CD4-positive, alpha-beta T cell (primary cell): ENCODE measurements at regions of chr5 and their contacts with region 1.

Region 1: GRCh38 chr5:132866342-132867045 is at the starts of genes GDF9 and UQCRQ:
- DNase-seq: peak; percentile 75 to 99 (median 84)
- ATAC-seq: peak; percentile 93
- H3K4me3 ChIP-seq: peak within 1 kb of the TSS; percentile 95
- H3K4me3 Mint-ChIP-seq: peak within 1 kb of the TSS; percentile 96
- H3K27ac ChIP-seq: peak within 1 kb of the TSS; percentile 95 to 98
- H3K27ac Mint-ChIP-seq: peak within 1 kb of the TSS; percentile 97
- H3K4me1 ChIP-seq: peaks cover 24% of the 10 kb centered on the region
- H3K4me1 Mint-ChIP-seq: peaks cover 31% of the 10 kb centered on the region
- H3K27me3 ChIP-seq: no peaks in the 10 kb centered on the region
- H3K27me3 Mint-ChIP-seq: no peaks in the 10 kb centered on the region
- CTCF ChIP-seq: no peak
- total RNA-seq, gene GDF9: 0.91 to 1.6 TPM
- total RNA-seq, gene UQCRQ: 119 to 132 TPM

Region 2: DNA sequence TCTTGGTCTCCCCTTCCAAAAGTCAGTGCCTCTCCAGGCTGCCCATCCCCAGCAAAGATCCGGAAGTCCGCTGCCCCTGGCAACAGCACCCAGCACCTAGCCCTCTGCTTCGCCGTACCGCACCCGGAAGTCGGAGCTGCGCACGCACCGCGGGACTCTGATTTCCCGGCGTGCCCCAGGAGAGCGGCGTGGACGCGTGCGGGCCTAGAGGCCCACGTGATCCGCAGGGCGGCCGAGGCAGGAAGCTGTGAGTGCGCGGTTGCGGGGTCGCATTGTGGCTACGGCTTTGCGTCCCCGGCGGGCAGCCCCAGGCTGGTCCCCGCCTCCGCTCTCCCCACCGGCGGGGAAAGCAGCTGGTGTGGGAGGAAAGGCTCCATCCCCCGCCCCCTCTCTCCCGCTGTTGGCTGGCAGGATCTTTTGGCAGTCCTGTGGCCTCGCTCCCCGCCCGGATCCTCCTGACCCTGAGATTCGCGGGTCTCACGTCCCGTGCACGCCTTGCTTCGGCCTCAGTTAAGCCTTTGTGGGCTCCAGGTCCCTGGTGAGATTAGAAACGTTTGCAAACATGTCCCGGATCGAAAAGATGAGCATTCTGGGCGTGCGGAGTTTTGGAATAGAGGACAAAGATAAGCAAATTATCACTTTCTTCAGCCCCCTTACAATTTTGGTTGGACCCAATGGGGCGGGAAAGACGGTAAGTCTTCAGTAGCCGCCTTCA is 309.6 kb before region 1 on chr5 and contains the start of gene RAD50:
- CTCF ChIA-PET with region 1: no interaction called
- POLR2A ChIA-PET with region 1: interaction called, 6 read pairs
- intact Hi-C with region 1: loop called in 1 of 2 experiments (anchors 5 kb)
- DNase-seq: peak; percentile 79 to 96 (median 88)
- ATAC-seq: peak; percentile 94
- H3K4me3 ChIP-seq: peak within 1 kb of the TSS; percentile 83
- H3K4me3 Mint-ChIP-seq: peak within 1 kb of the TSS; percentile 95
- H3K27ac ChIP-seq: peak within 1 kb of the TSS; percentile 76 to 78
- H3K27ac Mint-ChIP-seq: peak within 1 kb of the TSS; percentile 98
- H3K4me1 ChIP-seq: peaks cover 22% of the 10 kb centered on the region
- H3K4me1 Mint-ChIP-seq: peaks cover 43% of the 10 kb centered on the region
- H3K27me3 ChIP-seq: no peaks in the 10 kb centered on the region
- H3K27me3 Mint-ChIP-seq: no peaks in the 10 kb centered on the region
- CTCF ChIP-seq: no peak
- total RNA-seq, gene RAD50: 12.7 to 13.4 TPM

Region 3: DNA sequence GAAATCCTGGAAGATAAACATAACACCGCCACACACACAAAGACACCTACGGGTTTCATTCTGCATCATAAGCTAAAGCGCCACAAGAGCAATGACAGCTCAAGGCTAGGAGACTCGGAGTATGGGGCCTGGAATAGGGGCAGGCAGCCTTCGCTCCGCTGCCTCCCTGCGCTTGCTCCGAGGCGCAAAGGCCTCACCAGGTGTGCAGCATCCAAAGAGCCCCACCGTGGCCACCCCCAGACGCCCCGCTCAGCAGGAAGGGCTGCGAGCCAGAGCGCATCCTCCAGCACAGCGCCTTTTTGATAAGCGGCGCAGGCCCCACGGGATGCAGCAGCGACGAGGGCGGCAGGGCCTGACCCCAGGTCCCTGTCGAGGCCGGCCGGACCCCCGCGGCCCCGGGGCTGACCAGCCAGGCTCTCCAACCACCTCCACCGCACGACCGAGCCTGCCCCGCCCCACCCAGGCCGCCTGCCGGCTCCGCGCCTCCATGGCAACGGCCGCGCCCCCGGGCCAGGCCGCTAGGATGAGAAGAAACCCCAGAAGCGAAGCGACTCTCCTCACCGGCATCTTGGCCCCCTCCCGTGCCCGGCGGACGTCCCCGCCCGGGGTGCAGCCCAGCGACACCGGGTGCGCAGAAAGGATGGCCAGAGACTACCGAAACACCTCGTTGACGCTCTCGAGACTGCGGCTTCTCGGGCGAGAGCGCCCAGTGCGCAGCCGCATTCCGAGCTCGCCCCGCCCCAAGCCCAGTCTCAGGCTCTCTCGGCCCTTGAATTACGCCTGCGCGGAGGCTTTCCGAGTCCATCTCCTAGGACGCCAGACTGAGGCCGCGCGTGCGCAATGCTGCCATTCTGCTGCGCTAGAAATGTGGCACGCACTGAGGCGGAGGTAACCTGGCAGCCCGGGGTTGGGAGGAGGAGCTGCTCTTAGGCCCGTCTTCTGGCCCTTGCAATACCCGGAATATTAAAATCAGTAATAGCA is 129.4 kb before region 1 on chr5 and contains the start of gene KIF3A:
- CTCF ChIA-PET with region 1: no interaction called
- POLR2A ChIA-PET with region 1: no interaction called
- intact Hi-C with region 1: loop called in 1 of 2 experiments (anchors 5 kb)
- DNase-seq: peak; percentile 96 to 100 (median 98)
- ATAC-seq: peak; percentile 86
- H3K4me3 ChIP-seq: peak within 1 kb of the TSS; percentile 79
- H3K4me3 Mint-ChIP-seq: peak within 1 kb of the TSS; percentile 87
- H3K27ac ChIP-seq: peak within 1 kb of the TSS; percentile 74 to 81
- H3K27ac Mint-ChIP-seq: peak within 1 kb of the TSS; percentile 76
- H3K4me1 ChIP-seq: peaks cover 16% of the 10 kb centered on the region
- H3K4me1 Mint-ChIP-seq: peaks cover 31% of the 10 kb centered on the region
- H3K27me3 ChIP-seq: no peaks in the 10 kb centered on the region
- H3K27me3 Mint-ChIP-seq: no peaks in the 10 kb centered on the region
- CTCF ChIP-seq: peak; percentile 32
- total RNA-seq, gene KIF3A: 10.2 to 12.4 TPM

Region 4: GRCh38 chr5:132883261-132883834 is 16.9 kb after region 1 on chr5:
- CTCF ChIA-PET with region 1: interaction called, 11 read pairs
- POLR2A ChIA-PET with region 1: interaction called, 3 read pairs
- intact Hi-C with region 1: no loop called
- DNase-seq: peak in 5 of 14 experiments; percentile 7 to 73 (median 54)
- ATAC-seq: peak; percentile 83
- H3K4me3 ChIP-seq: no peak overlapping the region
- H3K4me3 Mint-ChIP-seq: no peak overlapping the region
- H3K27ac ChIP-seq: no peak overlapping the region
- H3K27ac Mint-ChIP-seq: peak overlapping the region; percentile 0
- H3K4me1 ChIP-seq: no peaks in the 10 kb centered on the region
- H3K4me1 Mint-ChIP-seq: no peaks in the 10 kb centered on the region
- H3K27me3 ChIP-seq: no peaks in the 10 kb centered on the region
- H3K27me3 Mint-ChIP-seq: no peaks in the 10 kb centered on the region
- CTCF ChIP-seq: peak; percentile 48

Region 5: GRCh38 chr5:132963175-132964104 is 96.9 kb after region 1 on chr5 and contains the start of gene AFF4:
- CTCF ChIA-PET with region 1: no interaction called
- POLR2A ChIA-PET with region 1: interaction called, 20 read pairs
- intact Hi-C with region 1: loop called in 1 of 2 experiments (anchors 2 kb)
- DNase-seq: peak; percentile 67 to 95 (median 80)
- ATAC-seq: peak; percentile 74
- H3K4me3 ChIP-seq: peak within 1 kb of the TSS; percentile 65
- H3K4me3 Mint-ChIP-seq: peak within 1 kb of the TSS; percentile 99
- H3K27ac ChIP-seq: peak within 1 kb of the TSS; percentile 92 to 96
- H3K27ac Mint-ChIP-seq: peak within 1 kb of the TSS; percentile 97
- H3K4me1 ChIP-seq: peaks cover 26% of the 10 kb centered on the region
- H3K4me1 Mint-ChIP-seq: peaks cover 39% of the 10 kb centered on the region
- H3K27me3 ChIP-seq: no peaks in the 10 kb centered on the region
- H3K27me3 Mint-ChIP-seq: no peaks in the 10 kb centered on the region
- CTCF ChIP-seq: no peak
- total RNA-seq, gene AFF4: 97.9 to 103 TPM

Region 6: DNA sequence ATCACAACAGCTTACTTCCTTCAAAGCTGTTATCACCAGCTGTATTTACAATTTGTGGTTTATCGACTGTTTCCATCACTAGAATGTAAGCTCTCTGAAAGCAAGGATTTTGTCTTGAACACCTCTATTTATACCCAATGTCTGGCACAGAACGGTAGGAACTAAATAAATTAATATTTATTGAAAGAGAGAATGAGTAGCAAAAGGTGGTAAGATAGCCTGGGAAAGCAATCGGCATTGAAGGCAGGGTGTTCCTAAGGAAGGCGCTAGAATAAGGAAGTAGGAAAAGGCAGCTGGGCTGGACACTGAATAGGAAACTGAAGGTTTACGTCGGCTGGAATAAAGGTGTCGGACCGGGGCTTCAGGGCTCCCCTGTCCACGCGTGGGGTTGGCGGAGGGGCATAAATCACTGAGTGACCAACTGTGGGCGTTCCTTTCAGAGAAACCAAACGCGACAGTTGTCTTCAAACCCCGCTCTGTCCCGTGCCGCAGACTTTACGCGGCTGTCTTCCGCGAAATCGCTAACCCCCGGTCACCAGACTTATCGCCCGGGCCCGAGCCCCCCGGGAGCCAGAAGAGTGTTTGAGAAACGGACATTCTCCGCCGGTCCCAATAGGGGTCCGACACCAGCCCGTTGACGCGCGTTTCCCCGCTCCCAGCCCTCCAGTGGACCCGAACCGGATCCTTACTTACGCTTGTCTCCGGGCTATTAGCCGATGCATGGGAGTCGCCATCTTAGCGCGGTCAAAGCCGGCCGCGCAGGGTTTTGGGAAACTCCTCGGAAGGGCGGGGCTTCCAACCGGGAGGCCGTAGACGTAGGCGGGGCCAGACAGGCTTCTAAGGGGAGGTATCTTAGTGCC is 159.5 kb after region 1 on chr5 and contains the start of gene ZCCHC10:
- CTCF ChIA-PET with region 1: no interaction called
- POLR2A ChIA-PET with region 1: no interaction called
- intact Hi-C with region 1: loop called in 1 of 2 experiments (anchors 5 kb)
- DNase-seq: peak; percentile 81 to 95 (median 88)
- ATAC-seq: peak; percentile 99
- H3K4me3 ChIP-seq: peak within 1 kb of the TSS; percentile 90
- H3K4me3 Mint-ChIP-seq: peak within 1 kb of the TSS; percentile 97
- H3K27ac ChIP-seq: peak within 1 kb of the TSS; percentile 83 to 88
- H3K27ac Mint-ChIP-seq: peak within 1 kb of the TSS; percentile 92
- H3K4me1 ChIP-seq: peaks cover 14% of the 10 kb centered on the region
- H3K4me1 Mint-ChIP-seq: peaks cover 21% of the 10 kb centered on the region
- H3K27me3 ChIP-seq: no peaks in the 10 kb centered on the region
- H3K27me3 Mint-ChIP-seq: no peaks in the 10 kb centered on the region
- CTCF ChIP-seq: no peak
- total RNA-seq, gene ZCCHC10: 17.7 to 20.1 TPM

Region 7: DNA sequence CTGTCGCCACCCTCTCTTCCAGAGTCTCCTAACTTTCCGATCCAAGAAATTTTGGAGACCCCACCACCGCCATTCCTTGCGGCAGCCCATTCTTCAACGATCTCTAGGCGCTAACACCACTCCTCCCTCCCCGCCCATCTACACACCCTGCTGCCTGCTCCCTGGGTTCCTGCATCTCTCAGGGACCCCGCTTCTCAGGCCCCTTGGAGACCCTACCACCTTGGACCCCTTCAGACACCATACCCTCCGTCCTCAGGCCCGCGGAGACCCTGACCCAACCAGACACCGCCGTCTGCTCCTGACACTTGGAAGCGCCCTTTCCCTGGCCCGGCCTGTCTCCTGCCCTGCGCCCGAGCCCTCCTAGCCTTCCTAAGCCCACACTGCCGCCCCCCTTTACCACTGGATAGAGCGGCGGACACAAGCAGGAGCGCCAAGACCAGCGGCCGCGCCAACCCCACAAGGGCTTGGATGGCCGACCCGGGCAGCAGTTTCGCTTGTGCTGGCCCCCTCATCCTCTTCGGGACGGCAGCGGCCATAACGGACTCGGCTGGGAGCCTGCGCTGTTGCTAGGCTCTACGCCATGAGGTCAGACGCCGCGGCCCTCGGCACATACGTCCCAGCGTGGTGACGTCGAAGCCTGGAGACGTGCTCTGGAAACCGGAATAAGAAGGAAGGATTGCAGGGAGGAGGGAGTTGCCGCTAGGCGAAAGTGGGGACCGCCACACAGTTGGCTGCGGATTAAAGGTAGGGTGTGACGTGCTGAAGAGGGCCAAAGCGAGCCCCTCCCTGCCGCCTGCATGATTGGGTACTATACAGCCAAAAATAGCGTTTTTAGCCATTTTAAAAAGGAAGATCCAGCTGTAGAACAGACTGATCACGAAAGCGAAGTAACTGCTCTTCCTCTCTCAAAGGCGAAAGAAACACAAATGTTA is 1101.8 kb after region 1 on chr5 and contains the start of gene C5orf15:
- CTCF ChIA-PET with region 1: no interaction called
- POLR2A ChIA-PET with region 1: no interaction called
- intact Hi-C with region 1: loop called in 1 of 2 experiments (anchors 10 kb)
- DNase-seq: peak; percentile 74 to 98 (median 89)
- ATAC-seq: peak; percentile 91
- H3K4me3 ChIP-seq: peak within 1 kb of the TSS; percentile 95
- H3K4me3 Mint-ChIP-seq: peak within 1 kb of the TSS; percentile 94
- H3K27ac ChIP-seq: peak within 1 kb of the TSS; percentile 82 to 86
- H3K27ac Mint-ChIP-seq: peak within 1 kb of the TSS; percentile 98
- H3K4me1 ChIP-seq: peaks cover 20% of the 10 kb centered on the region
- H3K4me1 Mint-ChIP-seq: peaks cover 57% of the 10 kb centered on the region
- H3K27me3 ChIP-seq: no peaks in the 10 kb centered on the region
- H3K27me3 Mint-ChIP-seq: no peaks in the 10 kb centered on the region
- CTCF ChIP-seq: no peak
- total RNA-seq, gene C5orf15: 12.3 to 15.5 TPM